MCF 10A (cell line): ENCODE measurements at regions of chr12 and their contacts with region 1.

Region 1: GRCh38 chr12:47882781-47883546 is 21.8 kb downstream of the VDR start:
- DNase-seq: peak; percentile 62
- H3K4me3 Mint-ChIP-seq: no peak overlapping the region
- H3K27ac Mint-ChIP-seq: no peak overlapping the region
- H3K4me1 Mint-ChIP-seq: peaks cover 50% of the 10 kb centered on the region
- H3K27me3 Mint-ChIP-seq: no peaks in the 10 kb centered on the region
- CTCF ChIP-seq: no peak

Region 2: GRCh38 chr12:47896633-47897032 is 13.7 kb after region 1 on chr12:
- CTCF ChIA-PET with region 1: interaction called, 10 read pairs
- POLR2A ChIA-PET with region 1: interaction called, 12 read pairs
- intact Hi-C with region 1: no loop called
- DNase-seq: peak; percentile 97
- H3K4me3 Mint-ChIP-seq: peak overlapping the region; percentile 52
- H3K27ac Mint-ChIP-seq: peak overlapping the region; percentile 70
- H3K4me1 Mint-ChIP-seq: peaks cover 44% of the 10 kb centered on the region
- H3K27me3 Mint-ChIP-seq: no peaks in the 10 kb centered on the region
- CTCF ChIP-seq: no peak